ENCODE measurements at regions of chr10 and their contacts with region 1.

Region 1: DNA sequence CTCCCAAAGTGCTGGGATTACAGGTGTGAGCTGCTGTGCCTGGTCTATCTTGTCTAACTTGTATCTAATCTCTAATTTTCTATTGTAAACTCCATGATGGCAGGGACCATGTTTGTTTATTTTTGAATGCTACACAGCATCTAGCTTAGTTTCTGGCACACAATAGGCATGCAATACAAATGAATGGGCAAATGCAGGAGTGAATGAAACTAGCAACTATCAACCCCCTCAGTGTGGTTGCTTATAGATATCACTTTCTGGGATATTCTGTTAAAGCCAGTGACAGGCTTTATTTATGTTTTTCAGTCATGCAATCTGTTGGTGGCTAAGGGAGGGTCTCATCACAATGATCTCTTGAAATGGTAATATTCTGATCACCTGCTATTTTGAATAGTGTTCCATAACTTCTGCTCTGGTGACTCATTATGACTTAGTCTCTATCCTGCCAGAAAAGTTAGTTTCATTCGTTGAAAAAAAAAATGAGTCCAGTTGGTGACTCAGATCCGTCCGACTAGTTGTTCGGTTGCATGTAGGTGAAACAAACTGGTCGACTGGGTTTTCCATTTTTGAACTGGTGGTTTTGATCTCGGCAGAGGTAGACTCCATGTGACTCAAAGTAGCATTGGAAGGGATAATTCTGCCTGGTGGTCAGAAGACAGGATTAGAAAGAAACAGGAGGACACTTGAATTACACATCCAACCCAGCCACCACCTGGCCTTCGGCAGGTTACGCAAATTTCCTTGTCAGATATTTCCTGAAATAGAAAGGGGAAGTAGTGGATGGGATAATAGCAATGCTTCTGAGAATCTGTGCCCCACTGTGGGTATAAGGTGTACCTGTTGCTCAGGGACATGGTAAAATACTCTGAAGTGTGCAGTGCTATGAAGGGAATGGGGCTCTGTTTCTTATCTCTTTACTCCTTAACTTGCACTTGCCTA is 76.8 kb downstream of the GATA3 start:
- DNase-seq: peak; percentile 56
- ATAC-seq: peak; percentile 82
- H3K4me3 Mint-ChIP-seq: no peak overlapping the region
- H3K27ac Mint-ChIP-seq: peak overlapping the region; percentile 51
- H3K4me1 Mint-ChIP-seq: peaks cover 40% of the 10 kb centered on the region
- H3K27me3 Mint-ChIP-seq: peaks cover 7% of the 10 kb centered on the region

Region 2: GRCh38 chr10:8059959-8060703 is 71.1 kb before region 1 on chr10:
- CTCF ChIA-PET with region 1: no interaction called
- POLR2A ChIA-PET with region 1: interaction called, 3 read pairs
- intact Hi-C with region 1: loop called (anchors 1 kb)
- DNase-seq: peak; percentile 83
- ATAC-seq: peak; percentile 55
- H3K4me3 Mint-ChIP-seq: peak overlapping the region; percentile 96
- H3K27ac Mint-ChIP-seq: peak overlapping the region; percentile 81
- H3K4me1 Mint-ChIP-seq: peaks cover 77% of the 10 kb centered on the region
- H3K27me3 Mint-ChIP-seq: no peaks in the 10 kb centered on the region

Region 3: GRCh38 chr10:8245131-8245813 is 114.0 kb after region 1 on chr10:
- CTCF ChIA-PET with region 1: no interaction called
- POLR2A ChIA-PET with region 1: interaction called, 4 read pairs
- intact Hi-C with region 1: loop called (anchors 1 to 5 kb)
- DNase-seq: no peak
- ATAC-seq: no peak
- H3K4me3 Mint-ChIP-seq: peak overlapping the region; percentile 48
- H3K27ac Mint-ChIP-seq: peak overlapping the region; percentile 70
- H3K4me1 Mint-ChIP-seq: peaks cover 49% of the 10 kb centered on the region
- H3K27me3 Mint-ChIP-seq: no peaks in the 10 kb centered on the region

Region 4: DNA sequence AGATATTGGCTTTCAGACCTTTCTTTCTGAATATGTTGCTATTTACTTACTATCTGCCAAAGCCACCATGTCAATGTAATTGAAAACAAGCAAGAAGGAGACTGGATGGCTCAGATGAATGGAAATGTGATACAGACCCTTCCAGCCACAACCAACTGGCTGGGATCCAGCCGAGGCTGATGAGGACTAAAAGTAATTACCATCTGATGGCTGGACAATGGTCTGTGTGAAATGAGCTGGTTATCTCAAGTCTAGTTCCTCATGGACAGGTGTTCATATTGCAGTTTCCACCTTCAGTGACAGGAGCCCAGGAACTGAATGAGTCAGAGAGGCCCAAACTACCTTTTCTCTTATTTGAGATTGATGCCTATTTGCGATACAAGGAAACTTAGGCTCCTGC is 190.7 kb after region 1 on chr10:
- CTCF ChIA-PET with region 1: no interaction called
- POLR2A ChIA-PET with region 1: no interaction called
- intact Hi-C with region 1: loop called (anchors 1 to 5 kb)
- DNase-seq: no peak
- ATAC-seq: no peak
- H3K4me3 Mint-ChIP-seq: no peak overlapping the region
- H3K27ac Mint-ChIP-seq: no peak overlapping the region
- H3K4me1 Mint-ChIP-seq: peaks cover 32% of the 10 kb centered on the region
- H3K27me3 Mint-ChIP-seq: peaks cover 2% of the 10 kb centered on the region

Region 5: GRCh38 chr10:8577686-8578085 is 446.4 kb after region 1 on chr10:
- CTCF ChIA-PET with region 1: no interaction called
- POLR2A ChIA-PET with region 1: no interaction called
- intact Hi-C with region 1: loop called in 1 of 2 experiments (anchors 5 kb)
- DNase-seq: peak; percentile 12
- ATAC-seq: peak; percentile 71
- H3K4me3 Mint-ChIP-seq: no peak overlapping the region
- H3K27ac Mint-ChIP-seq: peak overlapping the region; percentile 59
- H3K4me1 Mint-ChIP-seq: peaks cover 36% of the 10 kb centered on the region
- H3K27me3 Mint-ChIP-seq: peaks cover 31% of the 10 kb centered on the region

Region 6: DNA sequence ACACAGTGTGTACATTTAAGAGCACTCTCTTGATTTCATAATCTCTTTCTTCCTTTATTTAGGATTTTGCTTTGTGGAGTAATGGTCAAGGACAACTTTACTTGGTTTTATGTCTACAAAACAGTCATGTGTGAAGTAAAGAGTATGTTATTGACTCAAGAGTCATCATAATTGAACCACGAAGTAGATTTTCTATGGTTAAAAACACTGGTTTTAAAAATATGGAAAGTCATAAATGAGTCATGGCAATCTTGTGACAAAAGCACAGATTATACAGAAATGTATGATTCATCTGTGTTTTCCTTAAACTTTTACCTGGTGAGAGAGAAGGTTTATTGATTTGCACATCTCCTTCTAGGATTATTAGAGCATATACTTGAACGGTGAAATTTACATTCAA is 893.0 kb after region 1 on chr10:
- CTCF ChIA-PET with region 1: no interaction called
- POLR2A ChIA-PET with region 1: no interaction called
- intact Hi-C with region 1: loop called (anchors 10 kb)
- DNase-seq: no peak
- ATAC-seq: peak; percentile 72
- H3K4me3 Mint-ChIP-seq: no peak overlapping the region
- H3K27ac Mint-ChIP-seq: peak overlapping the region; percentile 81
- H3K4me1 Mint-ChIP-seq: peaks cover 47% of the 10 kb centered on the region
- H3K27me3 Mint-ChIP-seq: peaks cover 12% of the 10 kb centered on the region